ENCODE measurements at regions of chr4 and their contacts with region 1.

Region 1: DNA sequence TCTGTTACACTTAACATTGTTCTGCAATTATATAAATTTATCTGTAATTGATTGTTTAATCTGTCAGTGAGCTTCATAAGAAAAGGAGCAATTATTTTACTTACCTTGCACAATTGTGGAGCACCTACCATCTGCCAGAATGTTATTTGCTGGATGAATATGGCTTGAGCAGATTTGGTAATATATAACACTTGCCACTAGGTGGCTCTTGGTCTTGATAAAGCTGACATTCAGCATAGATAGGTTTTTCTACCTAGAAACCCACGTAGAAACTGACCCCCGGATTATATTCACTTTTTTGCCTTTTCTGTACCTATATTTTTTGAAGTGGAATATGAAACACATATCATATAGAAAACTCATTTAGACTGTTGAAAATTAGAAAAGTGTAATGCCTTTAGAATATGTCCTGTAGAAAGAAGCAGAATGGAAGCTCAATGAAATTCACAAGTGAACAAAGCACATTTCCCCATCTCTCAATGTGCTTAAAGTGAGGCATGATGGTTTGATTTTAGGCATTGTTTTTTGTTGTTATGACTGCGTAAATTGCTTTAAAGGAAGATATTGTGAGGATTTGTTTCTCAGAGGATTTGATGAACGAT is 9.5 kb downstream of the RBPJ start:
- DNase-seq: no peak
- H3K4me3 Mint-ChIP-seq: no peak overlapping the region
- H3K27ac Mint-ChIP-seq: no peak overlapping the region
- H3K4me1 Mint-ChIP-seq: peaks cover 45% of the 10 kb centered on the region
- H3K27me3 Mint-ChIP-seq: no peaks in the 10 kb centered on the region

Region 2: GRCh38 chr4:26319467-26319948 is 10.8 kb before region 1 on chr4:
- intact Hi-C with region 1: no loop called
- DNase-seq: peak; percentile 98
- H3K4me3 Mint-ChIP-seq: peak overlapping the region; percentile 94
- H3K27ac Mint-ChIP-seq: peak overlapping the region; percentile 100
- H3K4me1 Mint-ChIP-seq: peaks cover 33% of the 10 kb centered on the region
- H3K27me3 Mint-ChIP-seq: peaks cover 2% of the 10 kb centered on the region

Region 3: DNA sequence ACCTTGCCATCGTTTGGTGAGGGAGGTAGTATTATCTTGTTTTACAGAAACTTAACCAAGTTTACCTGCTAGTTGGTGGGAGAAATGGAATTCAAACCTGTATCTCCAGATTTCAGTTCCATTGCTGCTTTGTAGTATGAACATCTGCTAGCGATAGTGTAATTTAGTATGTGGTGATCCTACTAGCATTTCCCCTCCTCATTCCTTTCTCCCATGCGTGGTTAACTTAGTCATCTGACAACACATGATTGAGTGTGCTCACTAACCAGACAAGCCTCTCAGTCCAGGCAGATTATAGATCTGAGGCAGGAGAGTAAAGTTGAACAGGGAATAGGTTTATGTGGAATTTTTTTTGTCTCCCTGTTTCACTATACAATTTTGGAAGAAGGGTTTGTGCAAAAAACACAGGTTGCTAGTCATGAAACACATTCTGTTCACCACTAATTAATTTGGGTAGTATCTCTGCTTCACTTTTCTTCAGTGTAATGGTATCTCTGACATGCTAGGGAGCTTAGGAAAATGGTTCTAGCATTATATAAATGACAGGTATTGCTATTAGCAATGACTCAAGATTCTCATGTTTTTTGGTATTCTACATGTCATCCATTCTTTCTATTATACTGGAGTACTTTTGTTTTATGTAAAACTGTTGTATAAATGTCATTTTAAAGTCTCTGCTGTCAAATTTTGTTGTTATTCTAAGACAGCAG is 12.2 kb after region 1 on chr4:
- intact Hi-C with region 1: loop called (anchors 1 kb)
- DNase-seq: no peak
- H3K4me3 Mint-ChIP-seq: no peak overlapping the region
- H3K27ac Mint-ChIP-seq: no peak overlapping the region
- H3K4me1 Mint-ChIP-seq: peaks cover 57% of the 10 kb centered on the region
- H3K27me3 Mint-ChIP-seq: no peaks in the 10 kb centered on the region

Region 4: GRCh38 chr4:26410385-26411293 is 80.4 kb after region 1 on chr4:
- intact Hi-C with region 1: loop called (anchors 1 kb)
- DNase-seq: peak; percentile 19
- H3K4me3 Mint-ChIP-seq: no peak overlapping the region
- H3K27ac Mint-ChIP-seq: no peak overlapping the region
- H3K4me1 Mint-ChIP-seq: peaks cover 25% of the 10 kb centered on the region
- H3K27me3 Mint-ChIP-seq: no peaks in the 10 kb centered on the region

Region 5: GRCh38 chr4:26719954-26720552 is 389.8 kb after region 1 on chr4:
- intact Hi-C with region 1: loop called (anchors 5 kb)
- DNase-seq: no peak
- H3K4me3 Mint-ChIP-seq: no peak overlapping the region
- H3K27ac Mint-ChIP-seq: no peak overlapping the region
- H3K4me1 Mint-ChIP-seq: no peaks in the 10 kb centered on the region
- H3K27me3 Mint-ChIP-seq: peaks cover 2% of the 10 kb centered on the region

Measured in activated T-helper 1 cell treated with anti-CD3 and anti-CD28 coated beads, Interleukin-12 subunit alpha, Interleukin-12 subunit beta, Interleukin-2, Interleukin-4 antibody, amounts not matched to agents 30 ng/mL and 10 ng/mL and 1 ng/mL, durations not matched to agents 14 hours and 24 hours and 36 hours (primary cell).